K562 (cell line): ENCODE measurements at regions of chr4 and their contacts with region 1.

Region 1: GRCh38 chr4:189202182-189202868 is 738.3 kb upstream of the FRG1 start:
- DNase-seq: peak; percentile 23 to 38 (median 30)
- ATAC-seq: peak; percentile 56; the same call in 2 of the 3 replicates
- H3K4me3 ChIP-seq: no peak overlapping the region
- H3K27ac ChIP-seq: no peak overlapping the region
- H3K4me1 ChIP-seq: no peaks in the 10 kb centered on the region
- H3K27me3 ChIP-seq: no peaks in the 10 kb centered on the region
- CTCF ChIP-seq: peak; percentile 45 to 73 (median 55)
- EP300 ChIP-seq: no peak
- POLR2A ChIP-seq: no peak
- RAD21 ChIP-seq: peak; percentile 44 to 65

Region 2: GRCh38 chr4:187606581-187606980 is 1595.7 kb before region 1 on chr4:
- CTCF ChIA-PET with region 1: no interaction called
- POLR2A ChIA-PET with region 1: no interaction called
- in situ Hi-C with region 1: no loop called
- intact Hi-C with region 1: loop called (anchors 5 kb)
- DNase-seq: peak; percentile 37 to 67 (median 53)
- ATAC-seq: peak; percentile 73; the same call in 2 of the 3 replicates
- H3K4me3 ChIP-seq: no peak overlapping the region
- H3K27ac ChIP-seq: no peak overlapping the region
- H3K4me1 ChIP-seq: no peaks in the 10 kb centered on the region
- H3K27me3 ChIP-seq: no peaks in the 10 kb centered on the region
- CTCF ChIP-seq: peak; percentile 50 to 72 (median 69)
- EP300 ChIP-seq: no peak
- POLR2A ChIP-seq: no peak
- RAD21 ChIP-seq: peak; percentile 72 to 73

Region 3: GRCh38 chr4:189792924-189793618 is 590.7 kb after region 1 on chr4:
- CTCF ChIA-PET with region 1: no interaction called
- POLR2A ChIA-PET with region 1: no interaction called
- in situ Hi-C with region 1: no loop called
- intact Hi-C with region 1: loop called (anchors 5 kb)
- DNase-seq: peak; percentile 55 to 70 (median 60)
- ATAC-seq: peak; percentile 95
- H3K4me3 ChIP-seq: no peak overlapping the region
- H3K27ac ChIP-seq: no peak overlapping the region
- H3K4me1 ChIP-seq: no peaks in the 10 kb centered on the region
- H3K27me3 ChIP-seq: no peaks in the 10 kb centered on the region
- CTCF ChIP-seq: peak; percentile 74 to 89 (median 83)
- EP300 ChIP-seq: no peak
- POLR2A ChIP-seq: no peak
- RAD21 ChIP-seq: peak; percentile 87 to 95